HEK293 (cell line): ENCODE measurements at regions of chr3 and their contacts with region 1.

Region 1: GRCh38 chr3:50627407-50628051 is 10.6 kb downstream of the MAPKAPK3 start:
- H3K4me3 ChIP-seq: no peak overlapping the region
- H3K27ac ChIP-seq: no peak overlapping the region
- H3K4me1 ChIP-seq: peaks cover 2% of the 10 kb centered on the region
- CTCF ChIP-seq: peak; percentile 52; the same call in 1 of the 2 replicates

Region 2: GRCh38 chr3:50652709-50653108 is 25.2 kb after region 1 on chr3:
- CTCF ChIA-PET with region 1: interaction called, 25 read pairs
- POLR2A ChIA-PET with region 1: no interaction called
- H3K4me3 ChIP-seq: no peak overlapping the region
- H3K27ac ChIP-seq: no peak overlapping the region
- H3K4me1 ChIP-seq: no peaks in the 10 kb centered on the region
- CTCF ChIP-seq: peak; percentile 42; the same call in 1 of the 2 replicates